Common myeloid progenitor, CD34-positive (primary cell): ENCODE measurements at regions of chr6 and their contacts with region 1.

Region 1: DNA sequence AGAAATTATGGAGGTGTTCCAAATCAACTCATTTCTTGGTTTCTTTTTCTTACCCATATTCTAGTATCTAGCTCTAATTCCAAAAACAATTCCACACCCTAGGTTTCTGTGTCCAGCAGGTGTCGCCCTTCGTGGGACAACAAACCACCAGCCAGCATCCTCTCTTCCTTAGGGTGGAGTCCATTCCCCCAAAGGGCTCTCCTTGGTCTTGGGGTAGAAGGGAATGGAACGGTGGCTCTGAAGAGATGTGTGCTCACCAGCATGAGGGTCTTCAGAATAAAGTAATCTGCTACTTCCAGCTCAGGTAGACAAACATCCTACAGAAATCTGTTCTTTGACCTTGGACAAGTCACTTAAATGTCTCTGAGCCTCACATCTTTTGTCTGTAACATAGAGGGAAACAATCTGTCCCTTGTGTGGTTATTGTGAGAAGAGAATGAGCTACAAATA is 7.2 kb downstream of the HLA-DMB start:
- DNase-seq: peak; percentile 76 to 81 (median 76)
- H3K4me3 ChIP-seq: no peak overlapping the region
- H3K27ac ChIP-seq: no peak overlapping the region
- H3K4me1 ChIP-seq: peaks cover 0 to 18% (median under 1%) of the 10 kb centered on the region in 4 experiments
- H3K27me3 ChIP-seq: no peaks in the 10 kb centered on the region

Region 2: DNA sequence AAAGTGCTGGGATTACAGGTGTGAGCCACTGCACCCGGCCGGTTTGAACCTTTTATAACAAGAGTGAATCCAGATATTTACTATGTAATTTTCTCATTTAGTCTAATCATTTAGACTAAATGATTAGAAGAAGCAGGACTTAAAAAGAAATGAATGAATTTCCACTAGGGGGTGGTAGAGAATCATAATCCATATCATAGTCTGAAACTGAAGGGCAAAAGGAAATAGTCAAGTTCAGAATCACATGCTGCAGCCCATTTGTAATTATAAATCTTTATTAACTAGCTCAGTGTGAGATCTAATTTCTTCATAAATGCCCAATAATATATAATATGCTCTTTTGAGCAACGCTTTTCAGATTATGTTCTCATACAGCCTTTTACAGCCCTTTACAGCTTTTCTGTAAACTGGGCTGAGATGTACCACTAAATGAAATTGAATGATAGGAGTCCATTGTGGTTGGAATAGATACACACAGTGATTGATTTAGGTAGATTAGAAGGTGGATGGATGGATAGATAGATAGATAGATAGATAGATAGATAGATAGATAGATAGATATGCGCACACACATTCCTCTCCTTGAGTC is 47.9 kb before region 1 on chr6:
- CTCF ChIA-PET with region 1: interaction called, 21 read pairs
- POLR2A ChIA-PET with region 1: no interaction called
- DNase-seq: peak; percentile 80 to 92 (median 86)
- H3K4me3 ChIP-seq: no peak overlapping the region
- H3K27ac ChIP-seq: no peak overlapping the region
- H3K4me1 ChIP-seq: peaks cover 0 to 2% (median 0%) of the 10 kb centered on the region in 4 experiments
- H3K27me3 ChIP-seq: peaks cover 0 to 3% (median 0%) of the 10 kb centered on the region in 5 experiments

Region 3: GRCh38 chr6:32894080-32895005 is 39.3 kb before region 1 on chr6:
- CTCF ChIA-PET with region 1: interaction called, 18 read pairs
- POLR2A ChIA-PET with region 1: no interaction called
- DNase-seq: peak; percentile 92 to 96 (median 94)
- H3K4me3 ChIP-seq: peak overlapping the region; percentile 69 to 98 (median 97)
- H3K27ac ChIP-seq: peak overlapping the region; percentile 57 to 88
- H3K4me1 ChIP-seq: peaks cover 6 to 37% (median 18%) of the 10 kb centered on the region in 4 experiments
- H3K27me3 ChIP-seq: no peaks in the 10 kb centered on the region

Region 4: DNA sequence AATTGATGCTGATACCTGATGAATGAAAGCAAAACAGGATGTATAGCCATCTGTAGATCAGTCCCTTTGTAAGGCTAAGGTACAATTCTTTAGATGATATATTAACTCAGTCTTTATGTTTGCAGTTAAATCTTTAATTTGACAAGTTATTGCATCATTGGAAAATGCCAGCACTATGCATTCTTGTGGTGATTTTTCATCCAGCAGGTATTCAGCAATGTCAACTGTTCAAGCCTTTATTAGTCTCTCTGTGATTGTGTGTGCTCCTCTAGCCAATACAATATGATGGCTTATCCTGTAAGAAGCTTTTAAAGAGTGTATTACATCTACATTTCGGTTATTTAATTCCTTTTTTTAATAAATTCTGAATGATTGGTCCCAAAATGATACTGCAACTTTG is 27.1 kb before region 1 on chr6:
- CTCF ChIA-PET with region 1: interaction called, 24 read pairs
- POLR2A ChIA-PET with region 1: no interaction called
- DNase-seq: no peak
- H3K4me3 ChIP-seq: no peak overlapping the region
- H3K27ac ChIP-seq: no peak overlapping the region
- H3K4me1 ChIP-seq: no peaks in the 10 kb centered on the region
- H3K27me3 ChIP-seq: no peaks in the 10 kb centered on the region

Region 5: DNA sequence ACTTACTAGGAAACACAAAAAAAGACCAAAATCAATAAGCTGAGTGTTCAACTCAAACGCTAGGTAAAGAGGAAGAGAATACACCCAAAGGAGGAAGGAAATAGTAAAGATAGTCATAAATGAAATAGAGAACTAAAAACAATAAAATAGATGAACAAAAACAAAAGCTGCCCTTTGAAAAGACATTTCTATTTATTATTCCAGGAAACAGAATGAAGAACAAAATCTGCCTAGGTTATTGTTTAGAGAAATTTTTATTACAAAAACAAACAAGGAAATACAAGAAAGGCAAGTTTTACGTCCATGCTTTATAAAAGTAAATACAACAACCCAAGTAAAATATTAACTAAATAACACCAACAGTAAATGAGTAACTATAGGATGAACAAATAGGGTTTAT is 12.9 kb before region 1 on chr6:
- CTCF ChIA-PET with region 1: interaction called, 13 read pairs
- POLR2A ChIA-PET with region 1: no interaction called
- DNase-seq: peak in 2 of 3 donors; percentile 17 to 39
- H3K4me3 ChIP-seq: no peak overlapping the region
- H3K27ac ChIP-seq: no peak overlapping the region
- H3K4me1 ChIP-seq: peaks cover 0 to 23% (median 5%) of the 10 kb centered on the region in 4 experiments
- H3K27me3 ChIP-seq: no peaks in the 10 kb centered on the region

Region 6: DNA sequence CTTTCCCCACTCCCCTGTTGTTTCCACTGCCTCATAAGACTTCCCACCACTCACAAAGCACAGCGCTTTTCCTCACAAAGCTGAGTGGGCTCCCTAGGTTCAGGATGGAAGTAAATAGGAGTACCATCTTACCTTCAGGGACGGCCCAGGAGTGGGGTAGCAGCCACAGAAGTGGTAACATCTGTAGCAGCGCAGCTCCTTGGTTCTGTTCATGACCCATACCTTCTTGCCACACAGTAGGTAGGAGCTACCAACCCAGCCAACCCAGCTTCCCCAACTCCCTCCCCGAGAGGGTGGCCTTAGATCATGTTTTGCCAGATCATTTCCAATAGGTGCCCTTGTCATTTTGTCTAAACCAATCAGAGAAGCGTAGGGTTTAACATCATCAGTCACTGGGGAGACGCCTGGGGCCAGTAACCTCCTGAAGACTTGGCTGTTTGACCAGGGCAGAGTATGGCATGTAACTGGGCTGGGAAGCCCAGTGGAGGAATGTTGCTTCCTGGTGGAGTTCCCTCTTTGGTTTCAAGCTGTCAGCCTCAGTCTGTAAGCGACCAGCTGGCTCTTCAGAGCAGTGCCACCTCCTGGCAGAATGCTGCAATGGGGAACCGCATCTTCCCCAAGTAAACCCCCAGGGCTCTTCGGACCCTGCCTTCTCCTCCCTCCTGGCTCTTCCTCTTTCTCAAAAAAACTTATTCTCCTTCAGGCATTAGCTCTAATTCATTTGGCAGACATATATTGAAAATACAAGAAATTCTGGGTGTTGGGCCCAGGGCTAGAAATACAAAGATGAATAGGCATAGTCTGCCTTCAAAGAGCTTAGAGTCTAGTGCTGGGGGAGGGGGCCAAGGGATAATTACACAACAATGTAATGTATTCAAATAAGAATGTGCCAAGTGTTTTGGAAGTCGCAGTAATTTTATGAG is 19.4 kb after region 1 on chr6 and contains the start of gene HLA-DMA:
- CTCF ChIA-PET with region 1: interaction called, 175 read pairs
- POLR2A ChIA-PET with region 1: interaction called, 5 read pairs
- DNase-seq: peak; percentile 99 to 100 (median 99)
- H3K4me3 ChIP-seq: peak within 1 kb of the TSS; percentile 47 to 99 (median 80)
- H3K27ac ChIP-seq: peak within 1 kb of the TSS; percentile 78 to 91
- H3K4me1 ChIP-seq: peaks cover 13 to 55% (median 50%) of the 10 kb centered on the region in 4 experiments
- H3K27me3 ChIP-seq: no peaks in the 10 kb centered on the region